Activated T-helper 1 cell treated with anti-CD3 and anti-CD28 coated beads, Interleukin-12 subunit alpha, Interleukin-12 subunit beta, Interleukin-2, Interleukin-4 antibody, amounts not matched to agents 30 ng/mL and 10 ng/mL and 1 ng/mL, durations not matched to agents 14 hours and 24 hours and 36 hours (primary cell): ENCODE measurements at regions of chr22 and their contacts with region 1.

Region 1: DNA sequence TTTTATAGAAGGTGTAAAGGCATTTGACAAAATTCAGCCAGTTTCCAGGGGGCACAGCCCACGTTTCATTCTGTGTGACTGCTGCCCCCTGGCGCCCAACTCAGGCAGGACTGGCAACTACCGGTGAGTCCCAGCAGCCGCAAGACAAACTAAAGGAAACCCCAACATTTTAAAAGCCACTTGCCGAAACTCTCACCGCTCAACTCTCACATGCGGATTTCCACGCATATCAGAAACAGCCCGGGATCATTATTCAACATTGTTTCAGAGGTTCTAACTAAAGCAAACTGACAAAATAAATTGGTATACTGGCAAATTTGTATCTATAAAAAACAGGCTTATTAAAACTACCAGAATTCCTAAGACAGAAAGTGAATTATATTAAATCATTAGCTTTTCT is 48.2 kb downstream of the MORC2 start:
- DNase-seq: peak; percentile 69
- H3K4me3 Mint-ChIP-seq: peak overlapping the region; percentile 64
- H3K27ac Mint-ChIP-seq: peak overlapping the region; percentile 9
- H3K4me1 Mint-ChIP-seq: peaks cover 23% of the 10 kb centered on the region
- H3K27me3 Mint-ChIP-seq: no peaks in the 10 kb centered on the region

Region 2: GRCh38 chr22:30763815-30764686 is 156.4 kb before region 1 on chr22:
- intact Hi-C with region 1: loop called (anchors 1 kb)
- DNase-seq: peak; percentile 40
- H3K4me3 Mint-ChIP-seq: no peak overlapping the region
- H3K27ac Mint-ChIP-seq: no peak overlapping the region
- H3K4me1 Mint-ChIP-seq: peaks cover 4% of the 10 kb centered on the region
- H3K27me3 Mint-ChIP-seq: peaks cover 3% of the 10 kb centered on the region

Region 3: GRCh38 chr22:30802202-30803166 is 117.9 kb before region 1 on chr22:
- intact Hi-C with region 1: loop called (anchors 1 kb)
- DNase-seq: peak; percentile 77
- H3K4me3 Mint-ChIP-seq: no peak overlapping the region
- H3K27ac Mint-ChIP-seq: no peak overlapping the region
- H3K4me1 Mint-ChIP-seq: no peaks in the 10 kb centered on the region
- H3K27me3 Mint-ChIP-seq: peaks cover 17% of the 10 kb centered on the region